Activated CD4-positive, alpha-beta memory T cell treated with anti-CD3 and anti-CD28 coated beads for 36 hours (primary cell): ENCODE measurements at regions of chr12 and their contacts with region 1.

Region 1: DNA sequence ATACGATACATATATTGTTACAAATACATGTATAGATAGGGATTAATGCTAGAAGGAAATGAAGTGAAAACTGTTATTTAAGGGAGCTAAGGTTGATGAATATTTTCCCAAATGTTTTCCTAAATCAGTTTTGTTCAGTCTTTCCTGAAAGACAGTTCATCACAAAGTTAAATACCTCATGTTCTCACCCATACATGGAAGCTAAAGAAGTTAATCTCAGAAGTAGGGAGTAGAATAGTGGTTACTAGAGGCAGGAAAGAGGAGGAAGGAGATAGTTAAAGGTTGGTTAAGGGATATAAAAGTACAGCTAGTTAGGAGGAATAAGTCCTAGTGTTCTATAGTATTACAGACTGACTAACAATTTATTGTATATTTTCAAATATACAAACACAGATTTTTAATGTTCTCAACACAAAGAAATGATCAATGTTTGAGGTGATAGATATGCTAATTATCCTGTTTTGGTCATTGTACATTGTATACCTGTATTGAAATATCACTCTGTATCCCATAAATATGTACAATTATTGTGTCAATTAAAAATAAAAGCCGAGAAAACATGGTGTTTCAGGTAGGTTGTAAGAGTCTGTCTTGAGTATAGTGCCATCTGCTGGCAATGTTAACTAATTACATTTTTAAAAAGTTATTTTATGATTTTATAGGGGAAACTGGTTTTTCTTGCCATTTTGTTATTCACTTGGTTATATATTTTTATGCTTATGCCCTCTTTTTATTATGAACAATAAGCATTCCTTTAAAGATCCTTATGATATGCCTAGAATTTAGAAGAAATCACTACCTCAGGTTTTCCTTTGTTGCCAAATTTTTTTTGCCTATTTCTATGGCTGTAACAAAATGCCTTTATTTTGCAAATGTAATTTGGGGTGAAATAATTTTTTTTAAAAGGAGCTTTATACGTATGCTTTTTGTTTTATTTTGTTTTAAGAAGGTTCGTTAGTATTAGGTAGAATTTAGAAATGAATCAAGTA is 26.9 kb downstream of the ZDHHC17 start:
- DNase-seq: no peak
- H3K4me3 Mint-ChIP-seq: no peak overlapping the region
- H3K27ac Mint-ChIP-seq: no peak overlapping the region
- H3K4me1 Mint-ChIP-seq: peaks cover 7% of the 10 kb centered on the region
- H3K27me3 Mint-ChIP-seq: no peaks in the 10 kb centered on the region

Region 2: DNA sequence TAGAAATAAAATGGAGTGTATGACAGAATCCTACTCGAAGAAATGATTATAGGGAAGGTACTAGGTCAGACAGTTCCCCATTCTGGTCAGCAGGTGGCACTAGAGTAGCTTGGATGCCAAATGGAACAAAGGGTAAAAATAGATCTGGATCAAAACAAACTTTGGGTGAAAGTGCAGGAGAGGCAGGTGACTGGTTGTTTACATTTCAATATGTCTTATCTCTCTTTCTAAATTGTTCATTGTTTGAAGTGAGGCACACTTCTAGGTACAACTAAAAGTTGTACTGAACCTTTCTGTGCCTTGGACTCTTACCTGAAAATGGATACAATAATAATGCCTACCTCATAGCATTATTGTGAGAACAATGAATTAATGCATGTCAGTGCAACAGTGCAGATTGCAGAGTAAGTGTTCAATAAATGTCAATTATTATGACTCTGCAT is 169.3 kb before region 1 on chr12:
- CTCF ChIA-PET with region 1: interaction called, 119 read pairs
- POLR2A ChIA-PET with region 1: no interaction called
- intact Hi-C with region 1: loop called (anchors 1 kb)
- DNase-seq: peak; percentile 78
- H3K4me3 Mint-ChIP-seq: no peak overlapping the region
- H3K27ac Mint-ChIP-seq: no peak overlapping the region
- H3K4me1 Mint-ChIP-seq: peaks cover 4% of the 10 kb centered on the region
- H3K27me3 Mint-ChIP-seq: peaks cover 2% of the 10 kb centered on the region

Region 3: GRCh38 chr12:76688631-76689030 is 102.2 kb before region 1 on chr12:
- CTCF ChIA-PET with region 1: interaction called, 9 read pairs
- POLR2A ChIA-PET with region 1: no interaction called
- intact Hi-C with region 1: loop called (anchors 2 kb)
- DNase-seq: no peak
- H3K4me3 Mint-ChIP-seq: no peak overlapping the region
- H3K27ac Mint-ChIP-seq: no peak overlapping the region
- H3K4me1 Mint-ChIP-seq: no peaks in the 10 kb centered on the region
- H3K27me3 Mint-ChIP-seq: no peaks in the 10 kb centered on the region

Region 4: GRCh38 chr12:76763743-76764675 is 26.8 kb before region 1 on chr12 and contains the start of gene ZDHHC17:
- CTCF ChIA-PET with region 1: interaction called, 18 read pairs
- POLR2A ChIA-PET with region 1: no interaction called
- intact Hi-C with region 1: loop called (anchors 2 kb)
- DNase-seq: peak; percentile 93
- H3K4me3 Mint-ChIP-seq: peak within 1 kb of the TSS; percentile 99
- H3K27ac Mint-ChIP-seq: peak within 1 kb of the TSS; percentile 93
- H3K4me1 Mint-ChIP-seq: peaks cover 34% of the 10 kb centered on the region
- H3K27me3 Mint-ChIP-seq: no peaks in the 10 kb centered on the region
- total RNA-seq, gene ZDHHC17: 18.8 to 20.0 TPM

Region 5: DNA sequence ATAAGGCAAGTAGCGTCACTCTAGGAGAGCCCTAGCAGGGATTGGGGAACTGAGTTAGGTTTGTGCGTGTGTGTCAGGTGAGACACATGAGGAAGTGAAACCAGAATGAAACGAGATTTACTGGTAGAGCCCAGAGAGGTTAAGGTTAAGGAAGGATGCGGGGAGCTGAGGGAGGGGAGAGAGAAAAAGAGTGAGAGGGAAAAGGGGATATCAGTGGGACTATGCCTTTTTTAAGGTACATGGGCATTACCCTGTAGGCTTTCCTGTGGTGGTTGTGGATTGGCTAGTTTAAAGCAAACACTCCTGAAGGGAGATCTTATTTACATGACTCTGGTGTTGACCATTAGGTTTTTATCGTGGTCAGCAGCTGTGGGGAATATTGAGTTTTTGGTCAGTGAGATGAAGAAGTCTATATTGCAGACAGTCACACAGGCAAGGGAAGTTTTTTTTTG is 13.1 kb before region 1 on chr12:
- CTCF ChIA-PET with region 1: interaction called, 15 read pairs
- POLR2A ChIA-PET with region 1: no interaction called
- intact Hi-C with region 1: no loop called
- DNase-seq: no peak
- H3K4me3 Mint-ChIP-seq: no peak overlapping the region
- H3K27ac Mint-ChIP-seq: no peak overlapping the region
- H3K4me1 Mint-ChIP-seq: peaks cover 61% of the 10 kb centered on the region
- H3K27me3 Mint-ChIP-seq: no peaks in the 10 kb centered on the region

Region 6: DNA sequence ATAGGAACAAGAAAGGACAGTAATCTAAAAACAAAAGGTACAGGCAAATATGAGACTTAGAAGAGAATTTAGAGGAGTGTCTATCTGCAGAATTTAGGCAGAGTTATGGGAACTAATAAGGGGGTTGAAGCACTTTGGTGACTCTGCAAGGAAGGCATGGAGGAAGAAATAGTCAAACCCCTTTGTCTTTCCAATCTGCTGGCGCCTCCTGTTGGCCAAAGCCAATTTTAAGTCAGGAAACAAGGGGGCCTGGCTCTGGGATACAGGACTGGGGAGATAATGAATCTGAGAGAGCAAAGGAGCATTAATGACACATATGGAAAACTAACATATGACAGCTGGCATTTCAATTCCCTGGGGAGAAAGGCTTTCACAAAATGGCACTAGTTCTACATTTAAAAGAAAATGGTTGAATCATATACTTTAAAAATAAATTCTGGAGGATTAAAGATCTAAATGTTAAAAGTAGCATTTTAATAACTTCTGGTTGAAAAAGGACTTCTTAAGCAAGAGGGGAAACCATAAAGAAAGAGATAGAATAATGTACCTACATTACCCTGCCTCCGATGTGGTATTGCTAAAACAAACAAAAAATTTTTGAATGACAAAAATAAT is 136.4 kb after region 1 on chr12:
- CTCF ChIA-PET with region 1: no interaction called
- POLR2A ChIA-PET with region 1: no interaction called
- intact Hi-C with region 1: loop called (anchors 2 kb)
- DNase-seq: peak; percentile 50
- H3K4me3 Mint-ChIP-seq: no peak overlapping the region
- H3K27ac Mint-ChIP-seq: no peak overlapping the region
- H3K4me1 Mint-ChIP-seq: no peaks in the 10 kb centered on the region
- H3K27me3 Mint-ChIP-seq: peaks cover 5% of the 10 kb centered on the region

Region 7: DNA sequence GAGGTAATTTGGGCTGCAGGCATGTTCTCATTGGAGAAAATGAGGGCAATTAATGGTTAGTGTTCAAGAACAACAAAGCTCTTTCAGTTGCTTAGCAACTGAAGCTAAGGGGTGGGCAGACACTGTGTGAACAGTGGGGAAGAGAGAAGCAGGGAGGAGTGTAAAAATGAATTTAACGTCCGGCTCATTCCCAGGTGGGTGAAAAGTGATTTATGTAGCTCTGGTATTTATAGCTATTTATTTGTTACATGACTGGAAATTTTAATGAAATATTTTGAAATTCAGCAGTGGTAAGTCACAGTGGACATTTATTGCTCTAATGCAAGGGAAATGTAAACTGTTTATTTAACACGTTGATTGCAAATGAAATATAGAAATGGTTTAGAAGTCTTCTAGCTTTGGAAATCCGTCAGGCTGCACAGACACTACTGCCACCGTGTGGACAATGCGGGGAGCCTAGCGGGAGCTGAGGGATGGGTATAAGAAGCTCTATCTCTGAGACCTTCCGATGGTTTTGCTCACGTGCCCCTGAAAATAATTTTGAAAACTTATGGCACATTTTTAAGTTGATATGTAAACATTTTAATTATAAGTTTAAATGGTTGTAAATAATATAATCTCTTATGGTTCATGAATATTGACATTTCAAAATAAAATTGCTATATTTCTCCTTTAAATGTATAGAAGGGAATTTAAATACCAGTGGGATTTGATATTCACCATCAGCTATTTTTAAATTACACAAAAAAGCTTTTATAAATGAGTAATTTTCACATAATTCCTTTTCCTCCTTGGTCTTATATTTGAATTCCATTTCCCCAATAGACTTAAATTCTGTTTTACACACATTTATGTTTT is 220.1 kb after region 1 on chr12:
- CTCF ChIA-PET with region 1: interaction called, 20 read pairs
- POLR2A ChIA-PET with region 1: no interaction called
- intact Hi-C with region 1: loop called (anchors 10 kb)
- DNase-seq: peak; percentile 78
- H3K4me3 Mint-ChIP-seq: no peak overlapping the region
- H3K27ac Mint-ChIP-seq: no peak overlapping the region
- H3K4me1 Mint-ChIP-seq: peaks cover 3% of the 10 kb centered on the region
- H3K27me3 Mint-ChIP-seq: peaks cover 16% of the 10 kb centered on the region